Endothelial cell of umbilical vein (primary cell): ENCODE measurements at regions of chr1 and their contacts with region 1.

Region 1: GRCh38 chr1:44500181-44501046 is 95.4 kb downstream of the RNF220 start:
- DNase-seq: peak; percentile 59
- H3K4me3 ChIP-seq: no peak overlapping the region
- H3K27ac ChIP-seq: no peak overlapping the region
- H3K4me1 ChIP-seq: no peaks in the 10 kb centered on the region
- H3K27me3 ChIP-seq: peaks cover 26 to 29% of the 10 kb centered on the region in 2 experiments
- CTCF ChIP-seq: peak in 1 of 2 donors; percentile 48
- POLR2A ChIP-seq: no peak

Region 2: DNA sequence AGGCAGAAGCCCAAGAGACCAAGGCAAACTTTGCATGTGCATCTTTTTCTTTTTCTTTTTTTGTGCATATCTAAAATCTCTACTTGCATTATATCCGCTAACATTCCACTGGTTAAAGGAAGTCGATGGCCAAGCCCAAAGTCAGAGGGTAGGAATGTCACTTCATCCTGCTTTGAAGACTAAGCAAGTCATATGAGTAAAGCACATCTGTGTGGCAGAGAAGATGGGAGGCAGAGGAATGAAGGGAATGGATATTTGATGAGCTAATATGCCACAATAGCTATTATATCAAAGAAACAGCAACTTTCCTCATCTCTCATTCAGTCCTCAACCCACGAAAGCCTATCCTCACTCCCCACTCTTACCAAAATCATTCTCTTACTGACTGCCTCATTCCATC is 36.1 kb before region 1 on chr1:
- CTCF ChIA-PET with region 1: no interaction called
- POLR2A ChIA-PET with region 1: no interaction called
- dilution Hi-C with region 1: no loop called
- intact Hi-C with region 1: no loop called
- DNase-seq: no peak
- H3K4me3 ChIP-seq: no peak overlapping the region
- H3K27ac ChIP-seq: no peak overlapping the region
- H3K4me1 ChIP-seq: no peaks in the 10 kb centered on the region
- H3K27me3 ChIP-seq: peaks cover 9 to 22% of the 10 kb centered on the region in 2 experiments
- CTCF ChIP-seq: no peak
- POLR2A ChIP-seq: no peak

Region 3: DNA sequence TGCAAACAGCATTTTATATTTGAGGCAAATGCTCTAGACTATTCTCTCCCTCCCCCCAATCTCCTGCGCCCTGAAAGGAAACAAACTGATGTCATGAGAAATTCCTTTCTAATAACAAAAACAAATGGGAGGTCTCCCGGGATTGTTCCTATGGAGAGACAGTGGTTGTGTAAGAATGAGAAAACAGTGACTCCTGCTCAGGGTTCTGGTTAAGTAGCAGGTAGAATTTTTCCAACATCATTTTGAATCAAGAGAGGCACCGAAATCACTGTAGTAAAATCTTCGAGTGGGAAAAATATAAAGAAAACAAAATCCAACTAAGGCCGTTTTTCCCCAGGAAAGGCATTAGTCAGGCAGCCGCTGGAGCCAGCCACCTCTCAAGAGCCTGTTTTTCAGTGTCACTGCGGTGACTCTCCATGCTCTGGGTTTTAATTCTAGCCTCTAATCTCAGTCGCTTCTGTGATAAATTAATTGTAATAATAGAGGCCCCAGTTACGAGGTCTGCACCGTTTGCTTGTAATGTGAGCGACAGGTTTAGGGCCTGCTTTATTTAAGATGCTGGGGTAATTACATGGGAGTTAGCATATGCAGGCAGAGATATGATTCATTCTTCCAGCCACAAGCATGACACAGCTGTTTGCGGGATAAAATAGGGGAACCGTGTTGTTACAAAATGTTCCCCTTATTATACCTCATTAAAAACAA is 15.0 kb before region 1 on chr1:
- CTCF ChIA-PET with region 1: interaction called, 11 read pairs
- POLR2A ChIA-PET with region 1: no interaction called
- dilution Hi-C with region 1: no loop called
- intact Hi-C with region 1: no loop called
- DNase-seq: peak; percentile 90
- H3K4me3 ChIP-seq: no peak overlapping the region
- H3K27ac ChIP-seq: peak overlapping the region; percentile 97
- H3K4me1 ChIP-seq: peaks cover 25% of the 10 kb centered on the region
- H3K27me3 ChIP-seq: peaks cover 0 to 3% of the 10 kb centered on the region in 2 experiments
- CTCF ChIP-seq: no peak
- POLR2A ChIP-seq: peak; percentile 14